Kidney (tissue), 22 donors: ENCODE measurements at regions of chr20 and their contacts with region 1.

Region 1: GRCh38 chr20:50067866-50068612 is 44.9 kb downstream of the UBE2V1 start:
- DNase-seq: peak in 1 of 5 donors; percentile 41
- H3K4me3 ChIP-seq: no peak overlapping the region
- H3K27ac ChIP-seq: no peak overlapping the region
- H3K4me1 ChIP-seq: peaks cover 0 to 6% (median 0%) of the 10 kb centered on the region in 3 donors
- H3K27me3 ChIP-seq: no peaks in the 10 kb centered on the region
- CTCF ChIP-seq: no peak

Region 2: DNA sequence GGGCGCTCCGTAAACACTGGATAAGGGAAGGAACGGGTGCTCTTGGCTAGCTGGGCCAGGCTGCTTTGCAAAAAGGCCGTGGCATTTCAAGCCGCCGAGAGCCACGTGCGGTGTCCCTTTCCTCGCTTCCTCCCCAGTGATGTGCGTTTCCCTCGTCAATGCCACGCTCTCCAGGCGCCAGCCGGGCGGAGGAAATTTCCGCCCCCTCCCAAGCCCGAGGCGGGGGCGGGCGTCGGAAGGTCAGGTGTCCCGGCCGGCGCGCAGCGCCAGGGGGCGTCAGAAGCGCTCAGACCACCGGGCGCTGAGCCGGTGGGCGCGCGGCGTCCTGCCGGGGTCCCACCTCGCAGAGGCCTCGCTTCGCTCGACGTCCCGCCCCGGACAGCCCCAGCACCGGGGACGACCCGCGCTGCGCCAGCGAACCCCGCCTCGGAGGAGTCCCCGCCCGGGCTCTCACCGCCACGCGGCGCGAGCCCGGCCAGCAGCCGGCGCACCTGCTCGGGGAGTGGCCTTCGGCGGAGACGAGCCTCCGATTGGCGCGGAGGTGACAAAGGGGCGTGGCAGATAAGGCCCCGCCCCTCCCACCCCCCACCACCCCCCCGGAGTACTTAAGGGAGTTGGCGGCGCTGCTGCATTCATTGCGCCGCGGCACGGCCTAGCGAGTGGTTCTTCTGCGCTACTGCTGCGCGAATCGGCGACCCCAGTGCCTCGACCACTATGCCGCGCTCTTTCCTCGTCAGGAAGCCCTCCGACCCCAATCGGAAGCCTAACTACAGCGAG is 85.5 kb before region 1 on chr20 and contains the start of gene SNAI1:
- intact Hi-C with region 1: loop called (anchors 5 kb)
- DNase-seq: peak; percentile 91 to 96 (median 94)
- H3K4me3 ChIP-seq: peak within 1 kb of the TSS; percentile 59 to 70 (median 63)
- H3K27ac ChIP-seq: peak within 1 kb of the TSS; percentile 65 to 71
- H3K4me1 ChIP-seq: peaks cover 0 to 7% (median 0%) of the 10 kb centered on the region in 3 donors
- H3K27me3 ChIP-seq: no peaks in the 10 kb centered on the region
- CTCF ChIP-seq: peak; percentile 4
- total RNA-seq, gene SNAI1: 3.7 TPM